Psoas muscle (tissue), 8 donors: ENCODE measurements at regions of chr17 and their contacts with region 1.

Region 1: GRCh38 chr17:29615492-29616299 is 7.0 kb downstream of the CORO6 start:
- DNase-seq: peak; percentile 90 to 93
- ATAC-seq: peak; percentile 19 to 43 (median 32)
- H3K4me3 ChIP-seq: peak overlapping the region; percentile 53
- H3K27ac ChIP-seq: peak overlapping the region; percentile 69
- H3K4me1 ChIP-seq: peaks cover 66% of the 10 kb centered on the region
- H3K27me3 ChIP-seq: no peaks in the 10 kb centered on the region
- CTCF ChIP-seq: no peak

Region 2: GRCh38 chr17:29579866-29580771 is 35.6 kb before region 1 on chr17:
- intact Hi-C with region 1: loop called in 1 of 2 experiments (anchors 2 kb)
- DNase-seq: peak; percentile 88 to 95
- ATAC-seq: peak; percentile 88 to 94 (median 90)
- H3K4me3 ChIP-seq: no peak overlapping the region
- H3K27ac ChIP-seq: peak overlapping the region; percentile 42
- H3K4me1 ChIP-seq: peaks cover 27% of the 10 kb centered on the region
- H3K27me3 ChIP-seq: no peaks in the 10 kb centered on the region
- CTCF ChIP-seq: peak; percentile 90